ENCODE measurements at regions of chr19 and their contacts with region 1.

Region 1: GRCh38 chr19:3479834-3480215 is 500 bp downstream of the SMIM24 start:
- DNase-seq: no peak
- H3K4me3 ChIP-seq: peak overlapping the region in 2 of 3 donors; percentile 19 to 34
- H3K27ac ChIP-seq: no peak overlapping the region
- H3K4me1 ChIP-seq: no peaks in the 10 kb centered on the region
- H3K27me3 ChIP-seq: peaks cover 8 to 37% of the 10 kb centered on the region in 2 donors
- CTCF ChIP-seq: no peak
- POLR2A ChIP-seq: no peak

Region 2: DNA sequence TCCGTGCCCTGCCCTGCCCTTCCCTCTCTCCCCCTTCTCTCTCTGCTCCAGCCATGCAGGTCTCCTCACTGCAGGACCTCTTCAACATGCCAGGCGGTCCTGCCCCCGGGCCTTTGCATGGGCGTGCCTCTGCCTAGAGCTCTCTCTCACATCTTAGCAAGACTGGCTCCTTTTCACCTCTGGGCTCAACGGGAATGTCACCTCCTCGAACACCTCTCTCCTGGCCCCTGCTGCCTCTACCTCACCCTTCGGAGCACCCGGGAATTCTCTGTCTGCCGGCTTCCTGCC is 71.9 kb after region 1 on chr19:
- intact Hi-C with region 1: loop called (anchors 2 kb)
- DNase-seq: no peak
- H3K4me3 ChIP-seq: no peak overlapping the region
- H3K27ac ChIP-seq: no peak overlapping the region
- H3K4me1 ChIP-seq: peaks cover 0 to 14% of the 10 kb centered on the region in 2 donors
- H3K27me3 ChIP-seq: no peaks in the 10 kb centered on the region
- CTCF ChIP-seq: no peak
- POLR2A ChIP-seq: no peak

Region 3: DNA sequence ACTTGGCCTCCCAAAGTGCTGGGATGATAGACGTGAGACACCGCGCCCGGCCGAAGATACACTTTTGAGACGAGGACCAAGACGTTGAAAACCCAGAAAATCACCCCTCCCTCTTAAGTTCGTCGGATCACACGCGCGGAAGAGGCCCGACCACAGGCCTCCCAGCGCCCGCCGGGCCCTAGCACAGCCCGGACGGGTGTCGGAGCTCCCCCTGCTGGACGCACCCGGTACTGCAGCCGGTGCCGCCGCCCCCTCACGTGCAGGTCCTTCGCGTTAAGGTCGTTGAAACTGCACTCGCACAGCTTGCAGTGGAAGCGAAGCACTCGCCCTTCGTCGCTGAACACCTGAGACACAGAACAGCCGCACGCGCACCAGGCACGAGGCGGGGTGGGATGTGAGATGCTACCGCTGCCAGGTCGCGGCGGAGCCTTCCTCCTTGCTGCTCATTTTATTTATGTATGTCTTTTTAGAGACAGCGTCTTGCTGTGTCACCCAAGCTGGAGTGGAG is 342.1 kb after region 1 on chr19:
- intact Hi-C with region 1: no loop called
- DNase-seq: peak in 1 of 2 donors; percentile 69
- H3K4me3 ChIP-seq: no peak overlapping the region
- H3K27ac ChIP-seq: no peak overlapping the region
- H3K4me1 ChIP-seq: no peaks in the 10 kb centered on the region
- H3K27me3 ChIP-seq: peaks cover 0 to 23% of the 10 kb centered on the region in 2 donors
- CTCF ChIP-seq: peak; percentile 76 to 90 (median 83)
- POLR2A ChIP-seq: no peak

Measured in breast epithelium (tissue), 4 donors.